ENCODE measurements at regions of chr7 and their contacts with region 1.

Region 1: GRCh38 chr7:73851410-73852234 is 9.3 kb upstream of the METTL27 start:
- DNase-seq: no peak

Region 2: GRCh38 chr7:73799267-73800141 is 52.1 kb before region 1 on chr7:
- intact Hi-C with region 1: no loop called
- DNase-seq: no peak

Region 3: GRCh38 chr7:73817121-73817520 is 34.5 kb before region 1 on chr7:
- intact Hi-C with region 1: loop called (anchors 5 kb)
- DNase-seq: peak; percentile 60

Region 4: GRCh38 chr7:73865738-73866445 is 14.3 kb after region 1 on chr7:
- intact Hi-C with region 1: no loop called
- DNase-seq: no peak